CD8-positive, alpha-beta T cell (primary cell): ENCODE measurements at regions of chr22 and their contacts with region 1.

Region 1: DNA sequence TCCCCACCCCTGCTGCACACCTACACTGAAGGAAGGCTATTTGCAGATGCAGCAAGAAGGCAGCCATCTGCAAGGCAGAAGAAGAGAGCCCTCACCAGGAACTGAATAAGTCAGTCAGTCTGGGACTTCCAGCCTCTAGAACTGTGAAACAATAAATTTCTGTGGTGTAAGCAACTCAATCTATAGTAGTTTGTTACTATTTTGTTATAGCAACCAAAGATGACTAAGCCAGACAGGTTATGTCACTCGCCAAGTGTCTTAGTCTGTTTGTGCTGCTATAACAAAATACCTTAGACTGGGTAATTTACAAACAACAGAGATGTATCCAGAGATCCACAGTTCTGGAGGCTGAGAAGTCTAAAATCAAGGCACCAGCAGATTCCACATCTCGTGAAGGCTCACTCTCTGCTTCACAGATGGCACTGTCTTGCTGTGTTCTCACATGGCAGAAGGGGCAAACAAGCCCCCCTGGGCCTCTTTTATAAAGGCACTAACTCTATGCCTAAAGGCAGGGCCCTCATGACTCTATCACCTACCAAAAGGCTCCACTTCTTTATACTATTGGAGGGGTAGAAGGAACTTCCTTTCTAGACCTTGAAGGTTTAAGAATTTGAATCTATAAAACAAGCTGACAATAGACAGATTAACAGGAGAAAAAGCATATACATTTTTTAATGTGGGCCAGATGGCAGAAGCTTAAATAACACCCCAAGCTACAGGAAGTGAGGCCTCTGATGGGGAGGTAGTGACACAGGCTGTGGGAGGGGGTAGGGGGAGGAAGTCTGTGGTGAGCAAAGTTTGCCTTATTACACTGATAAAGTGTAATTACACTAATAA is 12.3 kb downstream of the APOL6 start:
- DNase-seq: peak in 8 of 9 experiments; percentile 48 to 90 (median 69)
- ATAC-seq: peak; percentile 85
- H3K4me3 ChIP-seq: peak overlapping the region in 1 of 2 experiments; percentile 29
- H3K4me3 Mint-ChIP-seq: peak overlapping the region; percentile 67
- H3K27ac ChIP-seq: peak overlapping the region; percentile 85 to 99
- H3K27ac Mint-ChIP-seq: peak overlapping the region; percentile 97
- H3K4me1 ChIP-seq: peaks cover 55% of the 10 kb centered on the region
- H3K4me1 Mint-ChIP-seq: peaks cover 78% of the 10 kb centered on the region
- H3K27me3 ChIP-seq: no peaks in the 10 kb centered on the region
- H3K27me3 Mint-ChIP-seq: no peaks in the 10 kb centered on the region
- CTCF ChIP-seq: no peak

Region 2: DNA sequence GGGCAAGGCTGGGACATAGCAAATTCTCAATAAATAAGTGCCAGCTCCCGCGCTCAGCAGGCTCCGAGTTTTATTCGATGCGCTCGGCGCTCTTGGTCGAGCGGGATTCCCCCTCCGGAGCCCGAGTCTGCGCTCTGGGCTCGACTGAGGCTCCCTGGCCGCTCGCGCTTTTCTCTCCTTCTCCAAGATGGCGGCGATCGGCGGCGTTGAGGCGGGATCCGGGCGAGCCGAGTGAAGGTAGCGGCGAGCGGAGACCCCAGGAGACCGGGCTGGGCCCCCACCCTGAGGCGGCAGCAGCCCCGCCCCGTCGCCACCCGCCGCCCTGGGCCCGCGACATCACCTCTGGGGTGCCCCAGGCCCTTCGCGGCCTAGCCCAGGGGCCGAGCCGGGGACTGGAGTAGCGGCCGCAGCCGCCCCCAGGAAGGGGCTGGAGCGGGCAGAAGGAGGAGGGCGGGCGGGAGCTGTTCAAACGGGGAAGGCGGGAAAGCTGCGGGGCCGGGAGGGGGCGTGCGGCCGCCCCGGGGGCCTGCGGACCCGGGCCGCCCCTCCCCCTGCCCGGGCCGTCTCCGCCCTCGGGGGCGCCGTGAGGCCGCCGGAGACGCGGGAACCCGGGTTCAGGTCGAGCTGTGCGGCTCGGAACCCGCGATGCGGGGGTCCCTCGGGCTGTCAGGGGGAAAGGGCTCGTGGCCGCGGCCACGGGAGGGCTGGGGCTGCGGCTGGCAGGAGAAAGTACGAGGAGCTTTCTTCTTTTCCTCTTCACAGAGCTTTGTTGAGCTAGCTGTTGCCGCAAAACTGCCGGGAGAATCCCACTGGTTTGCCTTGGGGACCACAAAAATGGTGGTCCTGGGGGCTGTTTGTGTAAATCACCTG is 403.0 kb before region 1 on chr22 and contains the start of gene HMGXB4:
- CTCF ChIA-PET with region 1: no interaction called
- POLR2A ChIA-PET with region 1: no interaction called
- intact Hi-C with region 1: loop called in 1 of 2 experiments (anchors 5 kb)
- DNase-seq: peak; percentile 74 to 95 (median 87)
- ATAC-seq: peak; percentile 91
- H3K4me3 ChIP-seq: peak within 1 kb of the TSS; percentile 72 to 90
- H3K4me3 Mint-ChIP-seq: peak within 1 kb of the TSS; percentile 93
- H3K27ac ChIP-seq: peak within 1 kb of the TSS; percentile 74 to 75
- H3K27ac Mint-ChIP-seq: peak within 1 kb of the TSS; percentile 96
- H3K4me1 ChIP-seq: peaks cover 16% of the 10 kb centered on the region
- H3K4me1 Mint-ChIP-seq: peaks cover 28% of the 10 kb centered on the region
- H3K27me3 ChIP-seq: no peaks in the 10 kb centered on the region
- H3K27me3 Mint-ChIP-seq: no peaks in the 10 kb centered on the region
- CTCF ChIP-seq: no peak
- total RNA-seq, gene HMGXB4: 42.6 to 47.0 TPM